Pancreas (tissue), 10 donors: ENCODE measurements at regions of chr6 and their contacts with region 1.

Region 1: GRCh38 chr6:63923139-63923739 is 287.6 kb downstream of the PHF3 start:
- DNase-seq: no peak
- ATAC-seq: peak; percentile 63 to 90 (median 84)
- H3K4me3 ChIP-seq: no peak overlapping the region
- H3K27ac ChIP-seq: no peak overlapping the region
- H3K4me1 ChIP-seq: peaks cover 0 to 8% (median 0%) of the 10 kb centered on the region in 3 donors
- H3K27me3 ChIP-seq: no peaks in the 10 kb centered on the region
- CTCF ChIP-seq: peak in 3 of 4 donors; percentile 26 to 44 (median 38)

Region 2: DNA sequence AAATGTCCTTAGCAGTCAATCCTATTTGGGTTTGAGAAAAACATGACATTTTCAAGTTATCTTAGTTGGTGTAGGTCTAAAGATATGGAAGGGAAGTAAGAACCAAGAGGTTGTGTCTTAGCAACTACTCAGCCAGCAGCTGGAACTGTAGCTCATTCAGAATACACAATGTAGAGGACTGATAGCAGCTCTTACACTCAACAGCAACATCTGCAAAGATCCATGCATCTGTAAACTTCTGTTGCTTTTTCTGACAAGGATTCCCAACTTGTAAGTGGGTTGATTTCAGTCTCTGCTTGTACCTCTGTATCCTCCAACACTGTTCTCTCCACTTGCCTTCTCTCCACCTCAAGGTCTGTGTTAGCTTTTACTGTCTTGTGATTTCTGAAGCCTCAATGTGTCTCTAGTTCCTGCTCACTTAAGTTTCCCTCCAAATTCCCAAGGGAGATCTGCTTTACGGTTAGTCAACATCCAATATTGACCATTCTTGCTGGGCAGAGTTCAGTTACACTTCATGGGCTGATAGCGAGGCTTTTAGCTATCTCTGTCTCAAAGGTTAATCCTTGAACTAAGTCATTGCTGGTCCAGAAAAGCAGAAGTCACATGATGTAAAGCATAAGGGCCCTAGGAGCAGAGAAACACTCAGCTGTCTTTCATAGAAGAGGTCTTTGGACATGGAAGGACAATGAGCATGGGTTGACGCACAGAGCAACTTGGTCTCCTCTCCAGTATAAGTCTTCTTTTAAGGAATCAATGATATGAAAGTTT is 531.9 kb before region 1 on chr6:
- intact Hi-C with region 1: no loop called
- DNase-seq: no peak
- ATAC-seq: peak in 2 of 4 donors; percentile 32 to 44
- H3K4me3 ChIP-seq: no peak overlapping the region
- H3K27ac ChIP-seq: no peak overlapping the region
- H3K4me1 ChIP-seq: no peaks in the 10 kb centered on the region
- H3K27me3 ChIP-seq: no peaks in the 10 kb centered on the region
- CTCF ChIP-seq: no peak

Region 3: DNA sequence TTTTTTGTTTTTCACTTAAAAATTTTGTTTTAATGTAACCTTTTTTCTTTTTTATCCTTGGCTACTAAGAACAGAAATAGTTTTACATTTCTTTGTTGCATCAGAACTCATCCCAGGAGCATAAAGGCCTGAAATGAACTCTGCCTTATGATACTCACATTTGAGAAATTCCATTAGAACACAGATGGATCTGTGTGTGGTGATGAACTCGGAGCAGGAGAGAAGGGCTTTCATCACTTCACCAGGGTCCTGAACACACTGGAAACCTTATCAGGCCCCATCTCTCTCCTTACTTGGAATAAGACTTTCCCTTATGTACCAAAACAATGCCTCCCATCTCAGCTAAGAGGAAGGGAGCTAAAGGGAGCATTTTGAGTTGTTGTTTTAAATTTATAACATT is 148.3 kb before region 1 on chr6:
- intact Hi-C with region 1: no loop called
- DNase-seq: no peak
- ATAC-seq: no peak
- H3K4me3 ChIP-seq: no peak overlapping the region
- H3K27ac ChIP-seq: no peak overlapping the region
- H3K4me1 ChIP-seq: no peaks in the 10 kb centered on the region
- H3K27me3 ChIP-seq: no peaks in the 10 kb centered on the region
- CTCF ChIP-seq: no peak

Region 4: DNA sequence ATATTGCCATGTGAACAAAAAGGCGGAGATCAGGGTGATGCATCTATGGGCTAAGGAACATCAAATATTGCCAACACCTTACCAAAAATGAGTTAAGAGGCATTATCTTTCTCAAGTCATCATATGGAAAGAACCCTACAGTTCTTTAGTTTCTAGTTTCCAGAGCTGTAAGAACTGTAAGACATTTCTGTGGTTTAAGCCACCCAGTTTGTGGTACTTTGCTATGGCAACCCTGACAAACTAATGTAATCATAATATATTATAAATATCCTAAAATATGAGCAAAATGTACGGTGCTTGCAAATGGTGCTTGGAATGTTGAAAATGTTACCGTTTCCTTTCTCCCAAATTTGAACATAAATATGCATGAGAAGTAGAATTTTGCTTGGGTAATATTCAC is 62.0 kb after region 1 on chr6:
- intact Hi-C with region 1: no loop called
- DNase-seq: no peak
- ATAC-seq: no peak
- H3K4me3 ChIP-seq: no peak overlapping the region
- H3K27ac ChIP-seq: no peak overlapping the region
- H3K4me1 ChIP-seq: no peaks in the 10 kb centered on the region
- H3K27me3 ChIP-seq: no peaks in the 10 kb centered on the region
- CTCF ChIP-seq: no peak

Region 5: GRCh38 chr6:64325093-64325492 is 401.9 kb after region 1 on chr6:
- intact Hi-C with region 1: loop called in 2 of 3 experiments (anchors 5 to 10 kb)
- DNase-seq: no peak
- ATAC-seq: no peak
- H3K4me3 ChIP-seq: no peak overlapping the region
- H3K27ac ChIP-seq: no peak overlapping the region
- H3K4me1 ChIP-seq: no peaks in the 10 kb centered on the region
- H3K27me3 ChIP-seq: peaks cover 0 to 4% (median 0%) of the 10 kb centered on the region in 4 donors
- CTCF ChIP-seq: no peak

Region 6: GRCh38 chr6:64330694-64331307 is 407.6 kb after region 1 on chr6:
- intact Hi-C with region 1: loop called in 2 of 3 experiments (anchors 5 to 10 kb)
- DNase-seq: peak; percentile 47 to 88 (median 65)
- ATAC-seq: peak; percentile 56 to 67 (median 64)
- H3K4me3 ChIP-seq: no peak overlapping the region
- H3K27ac ChIP-seq: no peak overlapping the region
- H3K4me1 ChIP-seq: no peaks in the 10 kb centered on the region
- H3K27me3 ChIP-seq: no peaks in the 10 kb centered on the region
- CTCF ChIP-seq: peak; percentile 50 to 66 (median 58)